Cardiac septum (tissue), 1 donor: ENCODE measurements at regions of chr6 and their contacts with region 1.

Region 1: GRCh38 chr6:74606581-74607071 is 599.2 kb downstream of the COL12A1 start:
- DNase-seq: no peak

Region 2: GRCh38 chr6:74152096-74152675 is 454.4 kb before region 1 on chr6:
- intact Hi-C with region 1: no loop called
- DNase-seq: no peak

Region 3: GRCh38 chr6:74458582-74458981 is 148.0 kb before region 1 on chr6:
- intact Hi-C with region 1: no loop called
- DNase-seq: no peak

Region 4: DNA sequence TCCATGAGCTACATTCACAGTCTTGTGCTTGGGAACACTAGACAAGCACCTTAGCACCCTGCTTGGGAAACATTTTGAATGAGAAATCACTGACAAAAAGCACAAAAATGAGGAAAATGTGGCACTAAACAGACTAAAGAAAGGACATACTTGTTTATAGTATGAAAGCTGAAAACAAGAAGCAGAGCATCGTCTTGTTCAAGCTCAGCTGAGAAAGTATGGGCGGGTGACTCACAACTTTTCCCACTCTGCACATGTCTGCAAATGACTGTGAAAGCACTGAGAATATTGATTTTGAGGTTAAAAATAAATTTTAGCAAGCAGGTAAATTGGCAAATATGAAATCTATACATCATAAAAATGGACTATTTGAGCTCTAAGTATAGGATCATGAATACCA is 126.1 kb before region 1 on chr6:
- intact Hi-C with region 1: no loop called
- DNase-seq: no peak

Region 5: DNA sequence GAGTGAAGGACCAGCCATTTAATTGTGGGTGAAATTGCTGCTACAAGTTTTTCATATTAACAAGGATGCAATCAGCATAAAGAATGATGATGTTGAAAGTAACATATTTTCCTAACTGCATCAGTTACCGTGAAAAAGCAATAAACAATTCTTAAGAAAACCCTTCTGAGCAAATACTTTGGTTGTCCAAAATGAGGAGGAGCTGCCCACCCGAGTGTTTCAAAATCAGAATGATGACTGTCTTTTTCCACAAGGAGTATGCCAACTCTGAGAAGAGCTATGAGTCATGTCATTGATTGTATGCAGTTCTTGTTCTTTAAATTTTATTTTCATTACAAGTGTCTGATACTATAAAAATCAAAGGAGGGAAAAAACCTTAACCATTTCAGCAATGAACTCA is 128.7 kb after region 1 on chr6:
- intact Hi-C with region 1: loop called (anchors 5 kb)
- DNase-seq: no peak